OCI-LY7 (cell line): ENCODE measurements at regions of chr3 and their contacts with region 1.

Region 1: GRCh38 chr3:152706991-152707713 is 127.8 kb upstream of the P2RY1 start:
- DNase-seq: no peak
- H3K4me3 ChIP-seq: no peak overlapping the region
- H3K27ac ChIP-seq: no peak overlapping the region
- H3K4me1 ChIP-seq: no peaks in the 10 kb centered on the region
- CTCF ChIP-seq: no peak

Region 2: GRCh38 chr3:151697496-151697895 is 1009.7 kb before region 1 on chr3:
- CTCF ChIA-PET with region 1: no interaction called
- POLR2A ChIA-PET with region 1: no interaction called
- intact Hi-C with region 1: no loop called
- DNase-seq: no peak
- H3K4me3 ChIP-seq: no peak overlapping the region
- H3K27ac ChIP-seq: no peak overlapping the region
- H3K4me1 ChIP-seq: no peaks in the 10 kb centered on the region
- CTCF ChIP-seq: no peak

Region 3: DNA sequence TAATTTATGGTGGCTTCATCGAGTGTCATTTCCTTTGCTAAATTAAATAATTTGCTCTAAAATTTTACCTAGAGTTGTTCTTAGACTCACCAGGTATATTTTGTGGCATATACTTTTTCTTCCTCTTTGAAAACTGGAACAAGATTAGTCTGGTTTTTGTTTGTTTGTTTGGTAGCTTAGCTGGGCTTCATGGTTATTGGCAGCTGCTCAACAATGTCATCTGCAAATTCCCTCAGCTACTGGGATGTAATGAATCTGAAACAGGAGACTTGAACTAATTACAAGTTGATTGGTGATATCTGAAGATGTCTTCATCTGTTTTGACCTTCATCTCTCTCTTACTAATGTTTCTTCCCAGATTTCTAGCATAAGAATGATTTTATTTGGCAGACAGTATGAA is 142.7 kb before region 1 on chr3:
- CTCF ChIA-PET with region 1: no interaction called
- POLR2A ChIA-PET with region 1: no interaction called
- intact Hi-C with region 1: no loop called
- DNase-seq: no peak
- H3K4me3 ChIP-seq: no peak overlapping the region
- H3K27ac ChIP-seq: no peak overlapping the region
- H3K4me1 ChIP-seq: no peaks in the 10 kb centered on the region
- CTCF ChIP-seq: no peak

Region 4: GRCh38 chr3:152719264-152719663 is 12.1 kb after region 1 on chr3:
- CTCF ChIA-PET with region 1: no interaction called
- POLR2A ChIA-PET with region 1: interaction called, 13 read pairs
- intact Hi-C with region 1: no loop called
- DNase-seq: no peak
- H3K4me3 ChIP-seq: no peak overlapping the region
- H3K27ac ChIP-seq: no peak overlapping the region
- H3K4me1 ChIP-seq: no peaks in the 10 kb centered on the region
- CTCF ChIP-seq: no peak